ENCODE measurements at regions of chr21 and their contacts with region 1.

Region 1: DNA sequence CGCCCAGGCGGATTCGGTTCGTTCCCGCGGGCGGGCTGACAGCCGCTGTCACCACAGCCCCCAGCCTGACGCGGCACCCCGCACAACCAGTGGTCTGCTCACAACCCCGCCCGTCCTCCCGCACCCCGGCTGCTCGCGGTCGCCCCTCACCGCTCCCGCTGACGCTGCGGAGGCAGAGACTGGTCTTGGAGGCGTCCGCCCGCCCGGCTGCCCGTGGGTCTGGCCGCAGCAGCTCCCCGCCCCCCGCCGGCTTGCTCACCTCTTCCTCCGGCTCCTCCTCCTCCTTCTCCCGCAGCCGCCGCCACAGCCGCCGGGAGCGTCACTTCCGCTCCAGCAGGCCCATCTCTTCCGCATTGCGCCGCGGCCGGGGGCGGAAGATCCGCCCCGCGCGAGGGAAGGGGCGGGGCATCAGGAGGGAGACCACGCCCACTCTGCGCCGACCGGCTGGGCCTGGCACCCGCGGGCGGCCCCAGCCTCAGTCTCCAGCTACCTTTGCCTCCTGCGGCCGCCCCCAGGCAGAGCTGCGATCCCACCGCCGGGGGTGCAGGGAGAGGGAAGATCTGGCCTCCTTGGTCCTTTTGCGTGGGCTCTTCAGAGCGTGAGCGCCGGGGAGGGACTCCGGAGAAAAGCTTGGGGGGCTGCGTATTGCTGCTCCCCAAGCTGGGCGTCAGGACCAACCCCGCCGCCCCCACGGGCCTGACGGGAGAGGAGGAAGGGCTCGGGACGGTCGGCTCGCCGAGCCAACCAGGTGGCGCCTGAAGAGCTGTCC is at the start of gene SYNJ1:
- H3K4me3 ChIP-seq: peak within 1 kb of the TSS; percentile 90
- H3K27ac ChIP-seq: peak within 1 kb of the TSS; percentile 65
- H3K4me1 ChIP-seq: 0 out of 2 replicates have a peak, but pooled peaks cover 4% of the 10 kb centered on the region
- CTCF ChIP-seq: peak; percentile 54

Region 2: DNA sequence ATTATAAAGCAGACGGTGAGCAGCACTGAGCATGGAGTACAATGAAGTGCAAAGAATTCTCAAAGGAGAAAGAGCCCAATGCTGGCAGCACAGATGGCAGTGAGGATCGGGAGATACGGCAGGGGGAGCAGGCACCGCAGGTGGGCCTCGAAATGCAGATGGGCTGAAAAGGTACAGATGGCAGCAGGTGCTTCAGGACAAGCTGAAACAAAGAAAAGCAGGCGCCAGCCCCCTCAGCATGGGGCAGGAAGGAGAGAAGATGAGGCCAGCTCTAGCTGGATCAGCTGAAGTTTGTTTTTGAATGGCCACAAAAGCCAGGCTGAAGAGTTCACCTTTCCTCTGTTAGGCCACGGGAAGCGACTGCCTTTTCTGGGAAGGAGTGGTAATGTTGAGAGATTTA is 123.4 kb before region 1 on chr21:
- CTCF ChIA-PET with region 1: no interaction called
- POLR2A ChIA-PET with region 1: no interaction called
- H3K4me3 ChIP-seq: no peak overlapping the region
- H3K27ac ChIP-seq: no peak overlapping the region
- H3K4me1 ChIP-seq: no peaks in the 10 kb centered on the region
- CTCF ChIP-seq: no peak

Region 3: GRCh38 chr21:32702702-32703101 is 25.2 kb before region 1 on chr21:
- CTCF ChIA-PET with region 1: no interaction called
- POLR2A ChIA-PET with region 1: interaction called, 10 read pairs
- H3K4me3 ChIP-seq: no peak overlapping the region
- H3K27ac ChIP-seq: no peak overlapping the region; the same call in 1 of the 2 replicates
- H3K4me1 ChIP-seq: peaks cover 26% of the 10 kb centered on the region
- CTCF ChIP-seq: no peak

Region 4: DNA sequence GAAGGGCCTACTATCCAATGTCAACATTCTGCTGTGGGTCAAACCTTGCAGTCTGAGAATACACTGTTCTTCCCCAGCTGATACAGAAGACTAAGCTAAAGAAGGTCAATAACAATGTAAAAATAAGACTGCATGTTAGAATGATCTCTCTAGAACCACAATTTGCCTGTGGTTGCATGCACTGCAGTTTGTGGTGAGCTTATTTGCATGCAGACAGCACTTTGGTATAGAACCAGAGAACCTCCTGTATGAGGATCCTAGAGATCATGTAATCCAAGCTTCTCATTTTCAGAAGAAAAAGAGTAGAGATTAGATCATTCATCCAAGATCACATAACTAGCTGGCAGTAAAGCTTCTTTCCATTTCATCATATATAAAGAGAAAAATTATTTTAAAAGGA is 15.8 kb before region 1 on chr21:
- CTCF ChIA-PET with region 1: interaction called, 7 read pairs
- POLR2A ChIA-PET with region 1: interaction called, 20 read pairs
- H3K4me3 ChIP-seq: no peak overlapping the region
- H3K27ac ChIP-seq: no peak overlapping the region
- H3K4me1 ChIP-seq: peaks cover 13% of the 10 kb centered on the region; the same call in 1 of the 2 replicates
- CTCF ChIP-seq: no peak

Region 5: DNA sequence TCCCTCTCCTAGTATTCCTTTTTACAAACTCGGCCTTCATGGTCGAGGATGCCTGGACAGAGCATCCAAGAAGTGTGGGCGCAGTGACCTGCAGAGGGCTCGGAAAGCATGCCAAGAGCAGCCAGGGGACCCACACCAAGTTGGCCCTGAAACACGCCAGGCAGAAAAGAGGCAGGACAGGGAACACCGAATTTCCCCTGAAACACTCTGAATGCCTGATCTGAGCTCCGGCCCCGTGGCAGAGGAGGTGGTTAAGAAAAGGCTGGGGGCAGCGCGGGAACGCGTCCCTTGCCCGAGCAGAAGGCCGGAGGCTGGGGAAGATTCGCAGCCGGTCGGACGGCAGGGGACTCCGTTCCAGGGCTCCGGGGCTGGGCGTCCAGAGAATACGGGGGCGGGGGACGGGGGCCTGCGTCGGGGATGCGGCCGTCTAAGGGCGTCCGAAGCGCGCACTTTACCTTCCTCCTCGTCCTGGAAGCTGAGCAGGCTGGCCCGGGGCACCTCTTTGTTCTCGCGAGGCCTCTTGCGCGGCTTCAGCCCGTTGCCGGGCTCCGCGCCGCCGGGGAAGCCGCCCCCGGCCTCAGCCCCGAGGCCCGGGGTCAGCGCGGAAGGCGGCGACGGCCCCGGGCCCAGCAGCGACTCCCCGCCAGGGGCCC is 43.1 kb after region 1 on chr21:
- CTCF ChIA-PET with region 1: interaction called, 5 read pairs
- POLR2A ChIA-PET with region 1: interaction called, 52 read pairs
- H3K4me3 ChIP-seq: peak overlapping the region; percentile 84
- H3K27ac ChIP-seq: peak overlapping the region; percentile 96
- H3K4me1 ChIP-seq: peaks cover 8% of the 10 kb centered on the region
- CTCF ChIP-seq: peak; percentile 56; the same call in 1 of the 2 replicates

Measured in HEK293 (cell line).